Calu3 (cell line): ENCODE measurements at regions of chr6 and their contacts with region 1.

Region 1: DNA sequence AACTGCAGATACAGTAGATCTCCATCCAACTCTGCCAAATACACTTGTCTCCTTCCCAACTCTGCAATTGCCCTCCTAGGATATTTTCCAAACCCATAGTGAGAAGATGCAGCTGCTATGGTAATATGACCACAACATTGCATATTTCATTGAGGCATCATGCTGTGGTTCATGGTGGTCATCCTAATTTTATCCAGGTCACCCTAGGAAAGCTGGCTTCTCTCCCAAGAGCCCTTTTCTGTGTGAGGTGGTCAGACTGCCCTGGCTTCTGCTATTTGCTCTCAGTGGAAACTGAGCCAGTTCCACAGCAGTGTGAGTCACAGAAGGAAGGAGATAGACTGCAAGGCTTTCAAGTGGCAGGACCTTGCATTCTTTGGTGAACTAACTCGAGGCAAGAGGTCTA is 5.5 kb downstream of the OGFRL1 start:
- DNase-seq: peak; percentile 47
- H3K4me3 Mint-ChIP-seq: no peak overlapping the region
- H3K27ac Mint-ChIP-seq: peak overlapping the region; percentile 63
- H3K4me1 Mint-ChIP-seq: peaks cover 51% of the 10 kb centered on the region
- H3K27me3 Mint-ChIP-seq: no peaks in the 10 kb centered on the region
- CTCF ChIP-seq: no peak

Region 2: DNA sequence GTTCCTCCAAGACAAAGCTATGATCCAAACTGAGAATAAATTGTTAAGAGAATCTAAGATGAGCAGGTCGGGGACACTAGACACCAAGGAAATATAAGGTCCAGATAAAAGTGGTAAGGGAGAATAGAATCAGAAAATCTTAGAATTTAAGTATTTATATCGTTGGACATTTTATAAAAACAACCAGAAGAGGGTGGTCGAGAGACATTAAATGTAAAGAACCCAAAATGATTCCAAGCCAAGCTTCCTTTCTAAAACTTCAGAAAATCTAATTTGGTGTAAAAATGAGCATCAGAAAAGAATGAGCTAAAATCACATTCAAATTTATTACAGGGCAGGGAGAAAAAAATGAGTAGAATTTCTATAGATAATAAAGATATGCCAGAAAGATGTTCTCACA is 103.3 kb before region 1 on chr6:
- CTCF ChIA-PET with region 1: no interaction called
- intact Hi-C with region 1: loop called (anchors 2 kb)
- DNase-seq: no peak
- H3K4me3 Mint-ChIP-seq: no peak overlapping the region
- H3K27ac Mint-ChIP-seq: no peak overlapping the region
- H3K4me1 Mint-ChIP-seq: no peaks in the 10 kb centered on the region
- H3K27me3 Mint-ChIP-seq: no peaks in the 10 kb centered on the region
- CTCF ChIP-seq: peak; percentile 29

Region 3: DNA sequence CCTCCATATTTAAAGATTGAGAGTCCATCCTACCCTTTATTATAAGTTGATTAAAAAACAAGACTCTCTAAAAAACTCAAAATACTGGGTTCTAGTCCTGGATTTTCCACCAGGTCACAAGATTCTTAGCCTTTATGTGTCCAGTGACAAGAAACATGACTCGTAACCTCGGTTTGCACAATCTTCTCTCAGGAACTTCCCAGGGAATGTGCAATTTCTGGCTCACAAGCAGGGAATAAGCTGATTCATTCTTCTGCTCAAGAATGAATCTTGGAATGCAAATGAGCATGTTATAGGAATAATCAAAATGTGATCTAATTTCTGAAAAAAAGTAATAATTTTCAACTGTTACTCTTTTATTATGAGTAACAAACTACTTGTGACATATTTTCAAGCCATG is 39.6 kb after region 1 on chr6:
- CTCF ChIA-PET with region 1: no interaction called
- intact Hi-C with region 1: loop called (anchors 5 kb)
- DNase-seq: peak; percentile 11
- H3K4me3 Mint-ChIP-seq: no peak overlapping the region
- H3K27ac Mint-ChIP-seq: peak overlapping the region; percentile 38
- H3K4me1 Mint-ChIP-seq: peaks cover 23% of the 10 kb centered on the region
- H3K27me3 Mint-ChIP-seq: no peaks in the 10 kb centered on the region
- CTCF ChIP-seq: no peak

Region 4: DNA sequence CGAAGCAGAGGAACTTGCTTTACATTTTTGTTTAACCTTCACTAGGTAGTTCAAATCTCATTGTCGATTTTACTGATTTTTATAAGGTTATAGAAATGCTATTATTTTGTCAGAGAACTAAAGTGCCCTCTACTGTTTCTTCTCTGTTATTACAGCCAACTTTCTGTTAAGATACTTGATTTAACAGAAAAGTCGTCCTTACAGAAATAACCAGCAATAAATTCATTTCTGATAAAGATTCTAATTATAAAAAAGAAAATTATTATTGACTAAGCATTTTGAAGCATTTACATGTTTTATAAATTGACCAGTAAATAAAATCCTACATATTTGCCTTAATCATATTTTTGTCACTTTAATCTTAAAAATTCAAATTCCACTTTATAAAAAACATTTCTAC is 55.3 kb after region 1 on chr6:
- CTCF ChIA-PET with region 1: no interaction called
- intact Hi-C with region 1: loop called (anchors 5 kb)
- DNase-seq: no peak
- H3K4me3 Mint-ChIP-seq: no peak overlapping the region
- H3K27ac Mint-ChIP-seq: no peak overlapping the region
- H3K4me1 Mint-ChIP-seq: no peaks in the 10 kb centered on the region
- H3K27me3 Mint-ChIP-seq: no peaks in the 10 kb centered on the region
- CTCF ChIP-seq: peak; percentile 73

Region 5: GRCh38 chr6:71375676-71376075 is 81.6 kb after region 1 on chr6:
- CTCF ChIA-PET with region 1: no interaction called
- intact Hi-C with region 1: no loop called
- DNase-seq: peak; percentile 47
- H3K4me3 Mint-ChIP-seq: peak overlapping the region; percentile 20
- H3K27ac Mint-ChIP-seq: peak overlapping the region; percentile 74
- H3K4me1 Mint-ChIP-seq: peaks cover 53% of the 10 kb centered on the region
- H3K27me3 Mint-ChIP-seq: no peaks in the 10 kb centered on the region
- CTCF ChIP-seq: no peak

Region 6: GRCh38 chr6:71404145-71404966 is 110.2 kb after region 1 on chr6:
- CTCF ChIA-PET with region 1: no interaction called
- intact Hi-C with region 1: no loop called
- DNase-seq: peak; percentile 51
- H3K4me3 Mint-ChIP-seq: peak overlapping the region; percentile 76
- H3K27ac Mint-ChIP-seq: peak overlapping the region; percentile 87
- H3K4me1 Mint-ChIP-seq: peaks cover 41% of the 10 kb centered on the region
- H3K27me3 Mint-ChIP-seq: no peaks in the 10 kb centered on the region
- CTCF ChIP-seq: no peak

Region 7: DNA sequence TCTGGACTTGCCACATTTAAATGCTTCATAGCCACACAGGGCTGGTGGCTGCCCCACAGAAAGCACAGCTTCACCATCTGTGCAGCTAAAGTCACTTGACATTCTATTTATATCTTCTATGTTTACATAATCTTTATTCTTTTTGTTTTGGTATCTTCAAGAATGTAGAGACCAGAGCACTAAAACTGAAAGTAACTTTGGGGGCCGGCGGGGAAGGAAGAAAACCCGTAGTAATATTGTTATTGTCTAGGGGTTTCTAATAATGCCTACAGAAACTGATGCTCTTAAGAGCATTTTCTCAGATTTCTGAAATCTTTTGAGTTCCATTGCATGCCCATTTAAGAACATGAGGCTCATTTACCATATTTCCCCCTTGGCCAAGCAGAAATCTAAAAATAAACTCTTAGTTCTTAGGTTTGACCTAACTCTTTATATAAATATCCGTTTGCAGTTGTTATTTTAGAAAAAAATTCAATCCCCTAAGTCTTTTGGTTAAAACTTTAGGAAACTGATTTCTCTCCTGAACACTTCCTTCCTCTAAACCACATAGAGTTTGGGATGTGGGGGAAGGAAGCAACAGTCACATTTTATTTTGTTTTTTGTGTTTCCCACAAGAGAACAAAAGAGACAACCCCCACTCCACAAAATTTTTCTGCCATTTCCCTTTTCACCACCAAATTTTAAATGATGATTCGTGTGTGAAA is 202.0 kb after region 1 on chr6:
- CTCF ChIA-PET with region 1: no interaction called
- intact Hi-C with region 1: loop called (anchors 5 kb)
- DNase-seq: no peak
- H3K4me3 Mint-ChIP-seq: no peak overlapping the region
- H3K27ac Mint-ChIP-seq: peak overlapping the region; percentile 20
- H3K4me1 Mint-ChIP-seq: peaks cover 40% of the 10 kb centered on the region
- H3K27me3 Mint-ChIP-seq: no peaks in the 10 kb centered on the region
- CTCF ChIP-seq: no peak